ENCODE measurements at regions of chr19 and their contacts with region 1.

Region 1: DNA sequence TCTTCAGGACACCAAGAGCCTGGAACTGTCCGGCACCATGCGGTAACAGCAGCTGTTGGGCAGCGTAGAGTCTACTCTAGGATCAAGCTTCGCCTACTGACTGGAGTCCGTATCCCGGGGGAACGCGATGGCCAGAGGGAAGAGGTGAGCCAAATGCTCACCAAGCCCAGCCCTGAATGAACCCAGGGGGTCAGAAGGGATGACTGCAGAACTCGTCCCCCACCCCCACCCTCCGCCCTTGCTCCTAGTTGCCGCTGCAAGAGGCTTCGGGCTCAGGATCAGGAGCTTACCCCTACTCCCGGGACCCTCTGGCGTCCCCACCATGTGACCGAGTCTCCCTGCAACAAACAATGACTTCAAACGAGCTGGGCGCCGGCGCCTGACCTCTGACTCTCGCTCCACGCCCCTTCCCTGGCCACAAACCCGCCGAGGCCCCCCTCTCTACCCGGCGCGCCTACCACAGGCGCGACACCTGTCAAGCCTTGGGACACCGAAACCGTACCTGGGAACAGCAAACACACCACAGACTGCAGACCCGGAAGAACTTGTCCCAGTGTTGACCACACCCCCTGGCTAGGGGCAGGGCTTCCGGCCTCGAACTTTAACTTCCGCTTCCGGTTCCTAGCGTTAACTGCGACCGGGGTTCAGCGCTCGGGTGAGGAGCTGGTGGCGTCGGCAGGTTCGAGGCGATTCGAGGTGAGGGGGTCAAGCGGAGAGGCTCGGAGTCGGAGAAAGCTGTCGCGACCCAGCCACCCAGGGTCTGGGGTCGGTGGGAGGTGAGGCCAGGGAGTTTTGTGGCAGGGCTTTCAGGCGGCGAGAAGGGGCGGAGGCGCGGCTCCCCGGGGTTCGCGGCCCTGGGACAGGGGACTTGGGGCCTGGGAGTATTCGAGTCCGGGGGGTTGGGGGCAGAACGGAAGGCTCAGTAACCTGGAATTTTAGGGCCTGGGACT is at the start of gene UBL5:
- DNase-seq: peak; percentile 81
- ATAC-seq: peak; percentile 95
- H3K4me3 Mint-ChIP-seq: peak within 1 kb of the TSS; percentile 100
- H3K27ac Mint-ChIP-seq: peak within 1 kb of the TSS; percentile 98
- H3K4me1 Mint-ChIP-seq: peaks cover 28% of the 10 kb centered on the region
- H3K27me3 Mint-ChIP-seq: no peaks in the 10 kb centered on the region
- CTCF ChIP-seq: no peak
- total RNA-seq, gene UBL5: 270 and 285 TPM in 2 replicates

Region 2: GRCh38 chr19:9674663-9675357 is 152.8 kb before region 1 on chr19 and contains the start of gene ZNF562:
- CTCF ChIA-PET with region 1: no interaction called
- POLR2A ChIA-PET with region 1: interaction called, 11 read pairs
- intact Hi-C with region 1: no loop called
- DNase-seq: peak; percentile 78
- ATAC-seq: peak; percentile 91
- H3K4me3 Mint-ChIP-seq: peak within 1 kb of the TSS; percentile 99
- H3K27ac Mint-ChIP-seq: peak within 1 kb of the TSS; percentile 98
- H3K4me1 Mint-ChIP-seq: peaks cover 29% of the 10 kb centered on the region
- H3K27me3 Mint-ChIP-seq: no peaks in the 10 kb centered on the region
- CTCF ChIP-seq: no peak
- total RNA-seq, gene ZNF562: 31.6 and 32.2 TPM in 2 replicates